Left lung (tissue), 14 donors: ENCODE measurements at regions of chr6 and their contacts with region 1.

Region 1: GRCh38 chr6:29016559-29017427 is 11.7 kb upstream of the ZNF311 start:
- DNase-seq: peak; percentile 76 to 90 (median 82)
- ATAC-seq: peak; percentile 97
- H3K4me3 ChIP-seq: peak overlapping the region; percentile 30 to 46
- H3K27ac ChIP-seq: no peak overlapping the region
- H3K4me1 ChIP-seq: peaks cover 0 to 13% of the 10 kb centered on the region in 2 donors
- H3K27me3 ChIP-seq: peaks cover 6 to 66% of the 10 kb centered on the region in 2 donors
- CTCF ChIP-seq: peak; percentile 71 to 79

Region 2: DNA sequence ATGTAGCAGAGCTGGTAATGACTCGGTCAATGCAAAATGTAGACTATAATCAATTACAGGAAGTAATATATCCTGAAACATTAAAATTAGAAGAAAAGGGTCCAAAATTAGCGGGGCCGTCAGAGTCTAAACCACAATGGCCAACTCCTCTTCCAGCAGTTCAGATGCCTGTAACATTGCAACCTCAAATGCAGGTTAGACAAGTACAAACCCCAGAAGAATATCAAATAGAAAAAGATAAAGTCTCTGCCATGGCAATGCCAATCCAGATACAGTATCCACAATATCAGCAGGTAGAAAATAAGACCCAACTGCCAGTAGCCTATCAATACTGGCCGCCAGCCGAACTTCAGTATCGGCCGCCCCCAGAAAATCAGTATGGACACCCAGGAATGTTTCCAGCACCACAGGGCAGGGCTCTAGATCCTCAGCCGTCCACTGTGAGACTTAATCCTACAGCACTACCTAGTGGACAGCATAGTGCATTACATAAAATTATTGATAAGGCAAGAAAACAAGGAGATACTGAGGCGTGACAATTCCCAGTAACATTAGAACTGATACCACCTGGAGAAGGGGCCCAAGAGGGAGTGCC is 332.8 kb before region 1 on chr6:
- intact Hi-C with region 1: loop called in 1 of 2 experiments (anchors 10 kb)
- DNase-seq: no peak
- ATAC-seq: peak; percentile 91
- H3K4me3 ChIP-seq: no peak overlapping the region
- H3K27ac ChIP-seq: no peak overlapping the region
- H3K4me1 ChIP-seq: no peaks in the 10 kb centered on the region
- H3K27me3 ChIP-seq: peaks cover 4 to 95% of the 10 kb centered on the region in 2 donors
- CTCF ChIP-seq: peak in 1 of 2 donors; percentile 46

Region 3: GRCh38 chr6:28838634-28839442 is 178.0 kb before region 1 on chr6:
- intact Hi-C with region 1: loop called in 1 of 2 experiments (anchors 5 kb)
- DNase-seq: peak; percentile 77 to 94 (median 86)
- ATAC-seq: peak; percentile 92
- H3K4me3 ChIP-seq: peak overlapping the region; percentile 60 to 65
- H3K27ac ChIP-seq: peak overlapping the region; percentile 43 to 72
- H3K4me1 ChIP-seq: peaks cover 0 to 18% of the 10 kb centered on the region in 2 donors
- H3K27me3 ChIP-seq: peaks cover 13 to 81% of the 10 kb centered on the region in 2 donors
- CTCF ChIP-seq: peak; percentile 30 to 42